HEK293 (cell line): ENCODE measurements at regions of chr20 and their contacts with region 1.

Region 1: GRCh38 chr20:10336959-10337728 is 96.9 kb downstream of the MKKS start:
- H3K4me3 ChIP-seq: no peak overlapping the region
- H3K27ac ChIP-seq: no peak overlapping the region
- H3K4me1 ChIP-seq: peaks cover 10% of the 10 kb centered on the region
- CTCF ChIP-seq: no peak

Region 2: DNA sequence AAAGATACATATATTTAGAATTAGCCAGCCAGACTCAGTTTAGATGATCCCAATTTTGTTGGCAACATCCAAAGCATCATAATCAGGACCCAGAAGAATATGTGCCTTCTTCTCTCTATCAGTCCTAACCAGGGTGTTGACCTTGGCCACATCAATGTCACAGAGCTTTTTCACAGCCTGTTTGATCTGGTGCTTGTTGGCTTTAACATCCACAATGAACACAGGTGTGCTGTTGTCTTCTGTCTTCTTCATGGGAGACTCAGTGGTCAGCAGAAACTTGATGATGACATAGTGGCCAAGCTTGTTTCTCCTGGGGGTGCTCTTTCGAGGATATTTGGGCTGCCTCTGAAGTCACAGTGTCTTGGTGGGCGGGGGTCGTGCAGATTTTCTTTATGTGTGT is 12.0 kb after region 1 on chr20:
- CTCF ChIA-PET with region 1: interaction called, 3 read pairs
- POLR2A ChIA-PET with region 1: interaction called, 10 read pairs
- H3K4me3 ChIP-seq: no peak overlapping the region
- H3K27ac ChIP-seq: no peak overlapping the region
- H3K4me1 ChIP-seq: peaks cover 17% of the 10 kb centered on the region
- CTCF ChIP-seq: no peak